ENCODE measurements at regions of chr11 and their contacts with region 1.

Region 1: DNA sequence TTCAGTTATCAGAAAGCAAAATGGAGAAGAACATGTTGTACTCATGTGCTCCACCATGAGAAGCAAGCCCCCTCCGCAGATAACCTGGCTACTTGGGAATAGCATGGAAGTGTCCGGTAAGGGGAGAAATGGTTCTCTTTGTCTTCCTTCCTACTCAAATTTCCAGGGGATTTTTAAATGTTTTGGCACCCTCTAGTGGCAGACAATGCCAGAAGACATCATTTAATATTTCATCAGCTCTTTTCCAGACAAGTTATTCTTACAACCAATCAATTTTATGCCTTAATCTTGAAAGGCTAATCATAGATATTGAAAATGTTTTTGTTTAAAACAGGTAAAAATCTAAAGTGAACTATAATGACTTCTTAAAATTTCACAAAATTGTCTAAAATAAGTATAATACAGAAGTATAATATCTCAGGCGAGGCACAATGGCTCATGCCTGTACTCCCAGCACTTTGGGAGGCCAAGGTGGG is 15.7 kb downstream of the CRTAM start:
- DNase-seq: peak in 24 of 35 experiments; percentile 6 to 84 (median 42)
- ATAC-seq: no peak
- H3K4me3 ChIP-seq: no peak overlapping the region
- H3K4me3 Mint-ChIP-seq: no peak overlapping the region
- H3K27ac ChIP-seq: peak overlapping the region; percentile 13
- H3K27ac Mint-ChIP-seq: no peak overlapping the region
- H3K4me1 ChIP-seq: peaks cover 15 to 53% of the 10 kb centered on the region in 2 experiments
- H3K4me1 Mint-ChIP-seq: peaks cover 39 to 52% (median 47%) of the 10 kb centered on the region in 3 donors
- H3K27me3 ChIP-seq: no peaks in the 10 kb centered on the region
- H3K27me3 Mint-ChIP-seq: no peaks in the 10 kb centered on the region

Region 2: DNA sequence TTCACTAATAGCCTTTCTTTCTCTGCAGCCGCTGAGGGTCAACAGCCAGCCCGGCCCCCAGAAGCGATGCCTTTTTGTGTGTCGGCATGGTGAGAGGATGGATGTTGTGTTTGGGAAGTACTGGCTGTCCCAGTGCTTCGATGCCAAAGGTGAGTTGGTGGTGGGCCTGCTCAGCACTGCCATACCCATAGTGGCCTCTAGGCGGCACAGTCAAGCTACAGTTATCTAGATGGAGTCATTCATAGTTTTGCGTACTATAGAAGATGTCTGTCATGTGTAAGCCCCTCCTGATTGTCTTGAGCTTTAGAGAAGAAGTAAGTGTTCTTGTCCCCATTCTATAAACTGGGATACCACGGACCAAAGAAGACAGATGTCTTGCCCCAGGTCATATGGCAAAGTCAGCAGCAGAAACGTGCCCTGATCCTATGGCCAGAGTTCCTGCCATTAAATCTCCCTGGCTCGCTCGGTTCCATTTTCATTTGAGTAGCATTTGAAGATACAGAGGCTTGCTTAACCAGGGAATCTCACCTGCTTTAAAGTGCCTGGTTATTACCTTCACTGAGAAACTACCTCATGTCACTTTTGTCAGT is 57.8 kb before region 1 on chr11:
- CTCF ChIA-PET with region 1: interaction called, 50 to 128 read pairs
- POLR2A ChIA-PET with region 1: interaction called, 4 to 6 read pairs
- DNase-seq: peak; percentile 12 to 80 (median 64)
- ATAC-seq: peak; percentile 81 to 86 (median 84)
- H3K4me3 ChIP-seq: no peak overlapping the region
- H3K4me3 Mint-ChIP-seq: no peak overlapping the region
- H3K27ac ChIP-seq: no peak overlapping the region
- H3K27ac Mint-ChIP-seq: no peak overlapping the region
- H3K4me1 ChIP-seq: peaks cover 0 to 2% of the 10 kb centered on the region in 2 experiments
- H3K4me1 Mint-ChIP-seq: peaks cover 0 to 8% (median 0%) of the 10 kb centered on the region in 3 donors
- H3K27me3 ChIP-seq: no peaks in the 10 kb centered on the region
- H3K27me3 Mint-ChIP-seq: no peaks in the 10 kb centered on the region

Region 3: GRCh38 chr11:122814401-122814800 is 39.6 kb before region 1 on chr11:
- CTCF ChIA-PET with region 1: interaction called in 1 of 2 experiments, 10 read pairs
- POLR2A ChIA-PET with region 1: no interaction called
- DNase-seq: peak in 1 of 35 experiments; percentile 34
- ATAC-seq: no peak
- H3K4me3 ChIP-seq: no peak overlapping the region
- H3K4me3 Mint-ChIP-seq: no peak overlapping the region
- H3K27ac ChIP-seq: no peak overlapping the region
- H3K27ac Mint-ChIP-seq: no peak overlapping the region
- H3K4me1 ChIP-seq: peaks cover 0 to 9% of the 10 kb centered on the region in 2 experiments
- H3K4me1 Mint-ChIP-seq: peaks cover 23 to 40% (median 27%) of the 10 kb centered on the region in 3 donors
- H3K27me3 ChIP-seq: no peaks in the 10 kb centered on the region
- H3K27me3 Mint-ChIP-seq: no peaks in the 10 kb centered on the region

Region 4: DNA sequence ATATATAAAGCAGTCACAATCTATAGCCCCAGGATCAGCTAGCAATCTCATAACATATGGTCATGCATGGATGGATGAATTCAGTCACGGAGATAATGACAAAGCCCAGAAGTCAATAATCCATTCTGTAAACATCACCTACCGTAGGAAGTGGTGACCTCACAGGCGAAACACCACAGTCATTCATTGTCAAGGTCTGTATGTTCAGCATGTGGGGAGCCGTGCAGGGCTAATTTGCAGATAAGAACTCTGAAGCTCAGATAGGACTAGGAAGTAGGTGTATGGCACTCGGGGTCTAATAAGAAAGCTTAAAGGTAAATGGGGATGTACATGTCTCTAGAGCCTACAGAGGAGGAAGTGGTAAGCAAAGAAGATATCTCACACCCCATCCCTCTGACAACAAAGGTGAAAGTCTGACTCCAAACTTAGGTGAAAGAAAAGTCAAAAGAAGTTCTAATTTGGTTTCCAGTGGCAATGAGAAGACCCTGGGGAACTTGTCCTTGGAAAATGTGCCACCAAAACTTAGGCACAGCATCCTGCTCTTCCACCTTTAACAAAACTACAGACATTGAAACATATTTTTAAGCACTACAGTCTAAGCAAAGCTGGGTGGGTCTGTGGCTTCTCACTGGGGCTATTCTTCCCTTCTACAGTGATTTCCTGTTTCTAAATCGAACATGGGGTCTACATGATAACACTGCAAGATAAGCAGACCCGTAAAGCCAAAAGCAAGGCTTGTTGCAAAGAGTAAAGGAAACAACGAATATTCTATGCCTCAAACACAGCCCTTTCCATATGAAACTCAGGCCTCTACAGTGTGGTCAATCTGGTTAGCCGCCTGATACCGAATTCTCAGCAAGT is 10.5 kb before region 1 on chr11:
- CTCF ChIA-PET with region 1: interaction called, 10 to 73 read pairs
- POLR2A ChIA-PET with region 1: interaction called, 3 to 29 read pairs
- DNase-seq: peak; percentile 20 to 79 (median 55)
- ATAC-seq: peak; percentile 90 to 93 (median 92)
- H3K4me3 ChIP-seq: peak overlapping the region; percentile 17 to 26
- H3K4me3 Mint-ChIP-seq: peak overlapping the region; percentile 48 to 66 (median 48)
- H3K27ac ChIP-seq: peak overlapping the region; percentile 91
- H3K27ac Mint-ChIP-seq: peak overlapping the region; percentile 86 to 87
- H3K4me1 ChIP-seq: peaks cover 45 to 61% of the 10 kb centered on the region in 2 experiments
- H3K4me1 Mint-ChIP-seq: peaks cover 57 to 72% (median 72%) of the 10 kb centered on the region in 3 donors
- H3K27me3 ChIP-seq: no peaks in the 10 kb centered on the region
- H3K27me3 Mint-ChIP-seq: no peaks in the 10 kb centered on the region

Region 5: GRCh38 chr11:122995526-122995925 is 141.5 kb after region 1 on chr11:
- CTCF ChIA-PET with region 1: no interaction called
- POLR2A ChIA-PET with region 1: no interaction called
- DNase-seq: no peak
- ATAC-seq: no peak
- H3K4me3 ChIP-seq: no peak overlapping the region
- H3K4me3 Mint-ChIP-seq: no peak overlapping the region
- H3K27ac ChIP-seq: no peak overlapping the region
- H3K27ac Mint-ChIP-seq: no peak overlapping the region
- H3K4me1 ChIP-seq: no peaks in the 10 kb centered on the region
- H3K4me1 Mint-ChIP-seq: no peaks in the 10 kb centered on the region
- H3K27me3 ChIP-seq: peaks cover 12 to 14% of the 10 kb centered on the region in 2 experiments
- H3K27me3 Mint-ChIP-seq: peaks cover 27 to 44% of the 10 kb centered on the region in 2 donors

Measured in T-cell (primary cell).